ENCODE measurements at regions of chr3 and their contacts with region 1.

Region 1: DNA sequence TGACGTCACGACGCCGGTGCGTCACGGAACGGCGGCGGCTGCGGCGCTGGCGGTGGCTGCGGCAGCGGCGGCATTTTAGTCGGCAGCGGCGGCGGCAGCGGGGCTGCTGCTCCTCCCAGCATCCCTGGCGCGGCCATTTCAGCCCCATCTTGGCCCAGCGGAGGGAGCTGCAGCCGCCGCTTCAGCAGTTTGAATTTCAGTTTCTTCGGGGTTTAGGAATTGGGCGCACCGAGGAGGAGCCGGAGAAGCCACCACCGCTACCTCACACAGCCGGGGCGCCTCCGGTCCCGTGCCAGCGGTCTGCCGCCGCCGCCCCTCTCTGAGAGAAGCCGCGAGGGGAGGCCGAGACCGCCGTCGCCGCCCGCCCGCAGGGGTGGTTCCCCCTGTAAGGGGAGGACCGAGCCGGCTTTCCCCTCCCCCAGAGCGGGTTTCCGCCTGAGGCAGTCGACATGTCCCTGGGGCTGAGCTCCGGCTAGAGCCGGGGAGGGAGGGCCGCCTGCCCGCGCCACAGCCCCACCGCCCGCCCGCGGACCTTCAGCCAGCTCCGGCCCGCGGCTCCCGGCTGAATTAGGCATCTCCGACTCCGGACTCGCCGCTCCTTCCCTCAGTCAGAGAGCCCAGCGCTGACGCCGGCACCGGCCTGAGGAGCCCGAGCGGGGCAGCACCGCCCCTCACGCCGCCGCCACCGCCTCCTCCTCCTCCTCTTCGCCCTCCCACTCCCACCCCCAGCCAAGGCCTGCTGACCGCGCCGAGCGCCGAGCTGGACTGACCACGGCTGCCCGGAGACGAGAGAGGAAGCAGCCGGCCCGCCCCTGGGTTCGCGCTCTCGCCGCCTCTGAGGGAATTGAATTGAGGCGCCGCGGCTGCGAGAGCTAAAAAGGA is at the start of gene TSC22D2:
- DNase-seq: peak; percentile 96
- H3K4me3 Mint-ChIP-seq: peak within 1 kb of the TSS; percentile 77
- H3K27ac Mint-ChIP-seq: peak within 1 kb of the TSS; percentile 99
- H3K4me1 Mint-ChIP-seq: peaks cover 23% of the 10 kb centered on the region
- H3K27me3 Mint-ChIP-seq: no peaks in the 10 kb centered on the region
- total RNA-seq, gene TSC22D2: 13.0 to 13.7 TPM

Region 2: GRCh38 chr3:149752051-149752787 is 656.2 kb before region 1 on chr3 and contains the start of gene COMMD2:
- CTCF ChIA-PET with region 1: no interaction called
- intact Hi-C with region 1: loop called (anchors 10 kb)
- DNase-seq: peak; percentile 89
- H3K4me3 Mint-ChIP-seq: peak within 1 kb of the TSS; percentile 96
- H3K27ac Mint-ChIP-seq: peak within 1 kb of the TSS; percentile 87
- H3K4me1 Mint-ChIP-seq: peaks cover 26% of the 10 kb centered on the region
- H3K27me3 Mint-ChIP-seq: no peaks in the 10 kb centered on the region
- total RNA-seq, gene COMMD2: 27.3 to 28.0 TPM

Region 3: DNA sequence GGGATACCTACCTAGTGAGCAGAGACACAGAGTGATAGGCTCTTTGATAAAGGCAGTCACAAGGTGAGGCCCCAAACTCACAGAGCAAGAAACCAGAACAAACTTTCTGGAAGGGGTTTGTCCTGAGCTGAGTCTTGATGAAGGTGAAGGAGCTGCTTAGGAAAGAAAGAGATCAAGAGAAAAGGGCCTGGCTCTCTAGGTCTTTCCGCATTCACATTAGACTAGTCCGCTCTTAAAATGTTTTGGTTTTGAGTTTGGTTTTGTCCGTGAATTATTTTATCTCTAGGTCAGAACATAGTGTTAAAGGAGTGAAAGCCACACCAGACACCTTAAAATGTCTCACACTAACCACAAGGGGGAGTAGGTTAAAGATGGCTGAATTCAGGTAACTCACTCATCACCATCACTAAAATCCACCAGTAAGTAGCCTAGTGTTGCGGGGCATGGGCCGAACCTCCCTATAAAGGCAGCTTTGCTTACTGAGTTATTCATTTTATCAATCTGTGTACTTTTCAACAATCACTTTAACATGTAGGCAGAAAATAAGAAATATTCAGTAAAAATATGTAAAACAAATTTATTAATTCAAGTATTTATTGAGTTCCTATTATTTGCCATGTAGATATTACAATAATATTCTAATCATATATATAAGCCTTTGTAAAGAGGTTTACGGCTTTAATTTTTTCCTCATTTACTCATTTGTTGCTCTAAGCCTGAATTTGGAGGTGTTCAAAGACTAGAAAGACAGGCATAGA is 121.9 kb before region 1 on chr3:
- CTCF ChIA-PET with region 1: interaction called, 3 read pairs
- intact Hi-C with region 1: loop called (anchors 1 kb)
- DNase-seq: peak; percentile 11
- H3K4me3 Mint-ChIP-seq: no peak overlapping the region
- H3K27ac Mint-ChIP-seq: no peak overlapping the region
- H3K4me1 Mint-ChIP-seq: no peaks in the 10 kb centered on the region
- H3K27me3 Mint-ChIP-seq: peaks cover 8% of the 10 kb centered on the region

Region 4: DNA sequence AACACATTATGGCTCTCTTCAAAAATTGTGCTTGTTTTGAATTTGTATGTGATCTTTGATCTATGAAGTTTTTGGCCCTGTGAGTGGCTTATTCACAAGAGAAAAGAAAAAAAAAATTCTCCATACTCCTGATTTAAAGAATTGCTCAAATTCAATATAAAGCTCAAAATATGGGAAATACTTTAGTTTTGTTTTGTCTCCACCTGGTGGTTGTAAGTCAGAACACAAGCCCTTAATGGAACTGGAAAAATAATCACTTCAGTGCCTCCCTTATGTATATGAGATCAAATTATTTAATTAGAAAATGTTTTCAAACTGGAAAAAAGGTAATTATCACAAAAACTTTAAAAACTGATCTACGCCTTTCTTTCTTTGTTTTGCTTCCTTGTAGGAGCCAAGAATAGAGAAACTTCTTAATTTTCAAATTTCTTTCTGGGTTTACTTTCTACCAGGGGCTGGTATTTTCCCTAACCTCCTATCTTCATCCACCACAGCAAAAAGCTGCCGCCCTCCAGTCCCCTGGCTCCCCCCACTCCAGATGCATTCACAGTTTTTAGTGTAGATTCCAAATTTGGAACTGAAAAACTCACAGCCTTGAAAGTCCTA is 87.2 kb after region 1 on chr3:
- CTCF ChIA-PET with region 1: interaction called, 40 read pairs
- intact Hi-C with region 1: loop called (anchors 1 kb)
- DNase-seq: peak; percentile 12
- H3K4me3 Mint-ChIP-seq: no peak overlapping the region
- H3K27ac Mint-ChIP-seq: no peak overlapping the region
- H3K4me1 Mint-ChIP-seq: no peaks in the 10 kb centered on the region
- H3K27me3 Mint-ChIP-seq: no peaks in the 10 kb centered on the region

Region 5: GRCh38 chr3:150787741-150788370 is 379.4 kb after region 1 on chr3:
- CTCF ChIA-PET with region 1: no interaction called
- intact Hi-C with region 1: loop called (anchors 1 kb)
- DNase-seq: peak; percentile 93
- H3K4me3 Mint-ChIP-seq: no peak overlapping the region
- H3K27ac Mint-ChIP-seq: no peak overlapping the region
- H3K4me1 Mint-ChIP-seq: peaks cover 49% of the 10 kb centered on the region
- H3K27me3 Mint-ChIP-seq: peaks cover 6% of the 10 kb centered on the region

Region 6: DNA sequence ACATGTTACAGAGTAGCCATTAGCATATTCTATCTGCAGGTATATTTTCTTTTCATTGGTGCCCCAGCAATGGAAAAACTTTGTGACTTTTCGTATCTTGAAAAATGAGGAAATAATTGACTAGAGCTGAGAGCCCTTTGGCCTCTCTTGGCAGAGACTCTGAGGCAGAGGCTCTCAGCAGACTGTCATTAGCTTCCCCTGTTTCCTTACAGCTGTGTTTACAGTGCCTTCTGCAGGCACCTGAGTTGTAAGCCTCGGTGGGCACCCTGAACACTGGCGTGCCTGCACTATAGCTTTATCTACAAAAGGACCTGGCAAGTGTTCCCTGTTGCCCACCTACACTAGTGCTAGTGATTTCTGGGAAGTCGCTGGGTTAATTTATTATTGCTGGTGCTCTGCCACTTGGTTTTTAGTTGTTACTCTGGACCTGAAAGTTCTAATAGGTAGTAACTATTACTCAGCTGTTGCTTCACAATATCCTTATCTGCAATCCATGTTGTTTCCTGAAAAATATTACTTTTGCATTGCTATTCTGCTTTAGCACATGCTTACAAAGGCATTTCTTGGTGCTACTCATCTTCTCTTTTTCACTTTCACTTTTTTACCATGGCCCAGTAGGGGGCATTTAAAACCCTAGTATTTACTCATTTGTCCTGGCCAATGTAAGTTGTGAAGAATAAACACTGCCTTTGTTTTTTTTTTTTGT is 802.4 kb after region 1 on chr3:
- CTCF ChIA-PET with region 1: no interaction called
- intact Hi-C with region 1: loop called (anchors 5 kb)
- DNase-seq: peak; percentile 31
- H3K4me3 Mint-ChIP-seq: peak overlapping the region; percentile 48
- H3K27ac Mint-ChIP-seq: peak overlapping the region; percentile 90
- H3K4me1 Mint-ChIP-seq: peaks cover 56% of the 10 kb centered on the region
- H3K27me3 Mint-ChIP-seq: no peaks in the 10 kb centered on the region

Region 7: GRCh38 chr3:151330899-151331298 is 922.4 kb after region 1 on chr3:
- CTCF ChIA-PET with region 1: no interaction called
- intact Hi-C with region 1: no loop called
- DNase-seq: no peak
- H3K4me3 Mint-ChIP-seq: no peak overlapping the region
- H3K27ac Mint-ChIP-seq: no peak overlapping the region
- H3K4me1 Mint-ChIP-seq: peaks cover 7% of the 10 kb centered on the region
- H3K27me3 Mint-ChIP-seq: peaks cover 4% of the 10 kb centered on the region